ENCODE measurements at regions of chr19 and their contacts with region 1.

Region 1: DNA sequence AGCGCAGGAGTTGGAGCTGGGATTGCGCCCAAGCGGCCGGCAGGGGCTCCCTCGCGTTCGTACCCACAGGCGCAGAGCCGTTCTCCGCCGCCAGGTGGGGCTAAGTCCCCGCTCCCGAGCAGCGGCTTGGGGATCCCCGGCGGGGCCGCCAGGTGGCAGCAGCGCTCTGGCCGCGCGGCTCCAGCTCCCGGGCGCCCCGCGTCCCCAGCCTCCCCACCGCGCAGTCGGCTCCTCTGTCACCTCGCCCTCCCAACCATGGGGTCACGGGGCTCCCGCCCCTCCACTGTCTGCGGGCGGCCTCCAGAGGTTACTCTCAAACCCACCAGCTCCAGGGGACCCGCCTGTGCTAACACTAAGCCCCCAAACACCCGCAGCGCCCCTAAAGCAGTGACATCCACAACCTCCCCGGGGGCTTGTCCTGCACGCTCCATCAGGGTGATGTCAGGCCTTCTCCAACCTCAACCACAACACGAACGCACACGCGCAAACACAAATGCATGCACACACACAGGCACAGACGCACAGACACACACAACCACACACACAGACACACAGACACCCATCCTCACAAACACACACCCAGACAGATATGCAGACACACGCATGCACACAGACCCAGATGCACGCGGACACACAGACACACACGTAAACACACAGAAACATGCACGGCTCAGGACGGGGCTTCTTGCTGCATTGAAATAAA is 18.4 kb upstream of the KCTD15 start:
- DNase-seq: peak; percentile 85 to 96
- ATAC-seq: peak; percentile 61 to 85
- H3K4me3 ChIP-seq: peak overlapping the region; percentile 42
- H3K27ac ChIP-seq: peak overlapping the region in 1 of 2 experiments; percentile 42; a peak in 2 of 6 replicates
- H3K4me1 ChIP-seq: peaks cover 27% of the 10 kb centered on the region
- CTCF ChIP-seq: peak; percentile 100
- EP300 ChIP-seq: no peak
- POLR2A ChIP-seq: no peak
- RAD21 ChIP-seq: peak; percentile 100

Region 2: GRCh38 chr19:33459222-33460090 is 318.8 kb before region 1 on chr19:
- CTCF ChIA-PET with region 1: interaction called, 23 read pairs
- POLR2A ChIA-PET with region 1: no interaction called
- DNase-seq: no peak
- ATAC-seq: no peak
- H3K4me3 ChIP-seq: no peak overlapping the region
- H3K27ac ChIP-seq: no peak overlapping the region
- H3K4me1 ChIP-seq: no peaks in the 10 kb centered on the region
- CTCF ChIP-seq: no peak
- EP300 ChIP-seq: no peak
- POLR2A ChIP-seq: no peak
- RAD21 ChIP-seq: no peak

Region 3: DNA sequence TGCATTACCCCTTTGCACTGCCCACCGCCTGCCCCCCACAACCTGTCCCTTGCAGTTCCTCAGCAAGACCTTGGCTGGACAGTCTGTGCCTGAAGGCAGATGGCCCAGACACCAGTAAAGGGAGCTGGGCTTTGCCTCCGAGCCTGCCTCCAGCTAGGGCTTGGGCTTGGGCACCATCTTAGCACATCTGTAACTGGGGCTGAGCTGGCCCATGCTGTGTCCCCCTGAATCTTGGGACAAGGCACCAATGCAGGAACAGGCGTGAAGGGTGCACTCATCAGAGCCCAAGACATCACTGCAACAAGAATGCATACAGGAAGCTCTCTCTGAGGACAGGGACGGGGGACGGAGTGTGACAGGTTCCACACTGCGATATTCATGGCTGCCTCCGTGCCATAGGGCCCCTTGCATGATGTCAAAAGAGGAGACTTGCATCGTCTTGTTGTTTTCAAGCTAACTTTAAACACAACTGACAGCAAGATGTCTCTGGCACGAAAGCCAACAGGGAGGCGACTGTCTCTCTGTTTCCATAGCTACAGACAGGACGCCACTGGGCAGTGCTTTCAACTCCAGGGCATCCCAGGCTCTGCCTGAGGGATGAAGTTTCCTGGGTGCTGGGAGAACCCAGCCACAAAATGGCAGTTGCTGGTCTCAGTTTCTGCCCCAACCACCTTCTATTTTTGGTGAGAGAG is 165.2 kb before region 1 on chr19:
- CTCF ChIA-PET with region 1: no interaction called
- POLR2A ChIA-PET with region 1: no interaction called
- DNase-seq: no peak
- ATAC-seq: peak in 1 of 2 experiments; percentile 26; a peak in 3 of 6 replicates
- H3K4me3 ChIP-seq: no peak overlapping the region
- H3K27ac ChIP-seq: no peak overlapping the region
- H3K4me1 ChIP-seq: no peaks in the 10 kb centered on the region
- CTCF ChIP-seq: no peak
- EP300 ChIP-seq: no peak
- POLR2A ChIP-seq: no peak
- RAD21 ChIP-seq: no peak

Region 4: GRCh38 chr19:33819880-33820781 is 41.9 kb after region 1 on chr19:
- CTCF ChIA-PET with region 1: interaction called, 44 read pairs
- POLR2A ChIA-PET with region 1: no interaction called
- DNase-seq: peak; percentile 76 to 93
- ATAC-seq: peak; percentile 90 to 92
- H3K4me3 ChIP-seq: peak overlapping the region; percentile 35
- H3K27ac ChIP-seq: peak overlapping the region; percentile 67 to 84
- H3K4me1 ChIP-seq: peaks cover 24% of the 10 kb centered on the region
- CTCF ChIP-seq: peak; percentile 13; the same call in 1 of the 3 replicates
- EP300 ChIP-seq: no peak
- POLR2A ChIP-seq: no peak
- RAD21 ChIP-seq: peak in 1 of 2 experiments; percentile 26; a peak in 1 of 5 replicates

Region 5: DNA sequence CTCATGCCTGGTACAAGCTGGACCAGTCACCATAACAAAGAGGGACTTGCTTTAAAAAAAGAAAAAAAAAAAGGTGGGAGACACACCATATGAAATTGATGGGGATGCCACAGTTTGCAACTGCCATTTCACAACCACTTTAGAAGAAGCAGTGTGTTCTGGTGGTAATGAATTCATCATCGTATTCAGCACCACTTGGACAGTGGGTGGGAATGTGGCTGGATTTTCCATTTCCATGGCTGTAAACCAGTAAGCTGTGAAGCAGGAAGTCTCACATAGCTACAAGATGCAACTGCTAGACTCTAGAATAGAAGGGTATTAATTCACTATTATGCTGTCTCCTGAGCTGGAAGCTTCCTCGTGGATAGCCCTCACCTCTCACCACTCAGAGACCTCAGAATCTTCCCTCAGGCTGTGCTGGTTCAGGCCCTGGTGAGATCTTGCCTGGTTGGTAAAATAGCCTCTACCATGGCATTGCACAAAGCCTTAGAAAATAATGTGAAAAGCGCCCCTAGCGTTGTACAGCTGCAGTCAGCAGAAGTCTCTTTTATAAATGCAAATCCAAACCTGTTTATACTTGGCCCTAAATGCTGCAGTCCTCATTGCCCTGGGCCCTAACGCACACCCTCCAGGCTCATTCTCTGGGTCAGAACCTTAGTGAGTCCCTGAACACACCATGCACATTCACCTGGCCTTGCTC is 169.2 kb after region 1 on chr19:
- CTCF ChIA-PET with region 1: interaction called, 18 read pairs
- POLR2A ChIA-PET with region 1: no interaction called
- DNase-seq: no peak
- ATAC-seq: peak; percentile 48 to 70; a peak in 3 of 6 replicates
- H3K4me3 ChIP-seq: no peak overlapping the region
- H3K27ac ChIP-seq: no peak overlapping the region
- H3K4me1 ChIP-seq: no peaks in the 10 kb centered on the region
- CTCF ChIP-seq: peak; percentile 42; the same call in 1 of the 3 replicates
- EP300 ChIP-seq: no peak
- POLR2A ChIP-seq: no peak
- RAD21 ChIP-seq: no peak

Region 6: DNA sequence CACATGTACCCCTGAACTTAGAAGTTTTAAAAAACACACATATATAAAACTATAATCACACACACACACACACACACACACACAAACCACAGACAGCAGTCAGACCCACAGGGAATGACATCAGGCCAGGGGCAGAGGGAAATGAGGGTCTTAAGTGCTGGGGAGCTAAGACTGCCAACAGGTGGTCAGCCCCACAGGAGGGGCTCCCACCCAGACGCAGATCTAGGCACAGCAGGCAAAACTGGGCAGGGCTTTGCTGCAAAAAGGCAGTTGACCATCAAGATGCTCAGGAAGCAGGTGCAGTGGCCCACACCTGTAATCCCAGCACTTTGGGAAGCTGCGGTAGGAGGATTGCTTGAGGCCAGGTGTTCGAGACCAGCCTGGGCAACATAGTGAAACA is 273.0 kb after region 1 on chr19:
- CTCF ChIA-PET with region 1: interaction called, 24 read pairs
- POLR2A ChIA-PET with region 1: no interaction called
- DNase-seq: no peak
- ATAC-seq: no peak
- H3K4me3 ChIP-seq: no peak overlapping the region
- H3K27ac ChIP-seq: no peak overlapping the region
- H3K4me1 ChIP-seq: no peaks in the 10 kb centered on the region
- CTCF ChIP-seq: no peak
- EP300 ChIP-seq: no peak
- POLR2A ChIP-seq: no peak
- RAD21 ChIP-seq: no peak

Region 7: GRCh38 chr19:34134190-34135053 is 356.2 kb after region 1 on chr19:
- CTCF ChIA-PET with region 1: interaction called, 258 read pairs
- POLR2A ChIA-PET with region 1: no interaction called
- DNase-seq: peak; percentile 93 to 99
- ATAC-seq: peak; percentile 94 to 97
- H3K4me3 ChIP-seq: peak overlapping the region; percentile 65
- H3K27ac ChIP-seq: peak overlapping the region; percentile 87 to 93
- H3K4me1 ChIP-seq: peaks cover 10% of the 10 kb centered on the region; the same call in 2 of the 3 replicates
- CTCF ChIP-seq: no peak
- EP300 ChIP-seq: no peak
- POLR2A ChIP-seq: peak; percentile 98
- RAD21 ChIP-seq: no peak